ENCODE measurements at regions of chr12 and their contacts with region 1.

Region 1: GRCh38 chr12:57604454-57604991 is at the start of gene DTX3:
- DNase-seq: peak; percentile 77
- CTCF ChIP-seq: no peak

Region 2: GRCh38 chr12:57401165-57401564 is 203.4 kb before region 1 on chr12:
- CTCF ChIA-PET with region 1: no interaction called
- POLR2A ChIA-PET with region 1: no interaction called
- DNase-seq: no peak
- CTCF ChIP-seq: no peak

Region 3: DNA sequence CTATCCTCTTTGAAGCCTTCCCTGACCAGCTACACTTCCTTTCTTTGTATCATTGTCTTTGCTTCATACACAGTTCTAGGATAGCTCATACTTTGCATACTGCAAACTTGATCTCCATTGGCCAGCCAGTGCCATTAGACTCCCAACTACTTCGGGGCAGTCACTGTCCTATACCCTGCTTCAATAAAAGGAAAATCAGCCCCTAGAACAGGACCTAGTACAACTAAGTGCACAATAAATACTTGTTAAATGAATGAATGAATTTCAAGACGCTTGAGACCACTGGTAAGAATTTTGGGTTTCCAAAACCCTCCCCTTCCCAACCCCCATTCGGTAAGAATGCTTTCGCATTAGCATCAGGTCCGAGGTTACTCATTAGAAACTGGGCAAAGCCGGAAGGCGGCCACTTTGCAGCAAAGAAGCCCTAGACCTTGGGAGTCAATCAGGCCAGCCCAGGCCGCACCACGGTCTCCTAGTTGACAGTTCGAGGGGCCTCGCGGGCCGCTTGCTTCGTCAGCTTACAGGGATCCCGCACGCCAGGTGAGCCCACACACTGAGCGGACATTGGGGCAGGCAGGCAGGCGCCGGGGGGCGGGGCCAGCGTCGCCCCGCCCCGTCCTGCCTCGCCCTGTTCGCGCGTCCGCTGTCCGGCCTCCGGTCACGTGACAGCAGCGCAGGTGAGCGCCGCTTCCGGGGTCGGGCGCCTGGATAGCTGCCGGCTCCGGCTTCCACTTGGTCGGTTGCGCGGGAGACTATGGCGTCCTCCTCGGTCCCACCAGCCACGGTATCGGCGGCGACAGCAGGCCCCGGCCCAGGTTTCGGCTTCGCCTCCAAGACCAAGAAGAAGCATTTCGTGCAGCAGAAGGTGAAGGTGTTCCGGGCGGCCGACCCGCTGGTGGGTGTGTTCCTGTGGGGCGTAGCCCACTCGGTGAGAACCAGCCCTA is 13.7 kb before region 1 on chr12 and contains the start of gene PIP4K2C:
- CTCF ChIA-PET with region 1: interaction called, 47 read pairs
- POLR2A ChIA-PET with region 1: interaction called, 11 read pairs
- DNase-seq: peak; percentile 97
- CTCF ChIP-seq: no peak